ENCODE measurements at regions of chr14 and their contacts with region 1.

Region 1: GRCh38 chr14:23530375-23531055 is 21.1 kb downstream of the ZFHX2 start:
- DNase-seq: no peak
- ATAC-seq: peak in 1 of 8 donors; percentile 63
- H3K4me3 ChIP-seq: no peak overlapping the region
- H3K27ac ChIP-seq: peak overlapping the region in 3 of 10 donors; percentile 8 to 39 (median 10)
- H3K4me1 ChIP-seq: peaks cover 0 to 8% (median 0%) of the 10 kb centered on the region in 9 donors
- H3K27me3 ChIP-seq: no peaks in the 10 kb centered on the region
- CTCF ChIP-seq: no peak

Region 2: GRCh38 chr14:23061995-23062394 is 468.5 kb before region 1 on chr14:
- intact Hi-C with region 1: no loop called
- DNase-seq: peak in 1 of 2 donors; percentile 63
- ATAC-seq: peak in 6 of 8 donors; percentile 26 to 66 (median 47)
- H3K4me3 ChIP-seq: no peak overlapping the region
- H3K27ac ChIP-seq: peak overlapping the region in 4 of 10 donors; percentile 4 to 37 (median 23)
- H3K4me1 ChIP-seq: peaks cover 5 to 26% (median 13%) of the 10 kb centered on the region in 9 donors
- H3K27me3 ChIP-seq: no peaks in the 10 kb centered on the region
- CTCF ChIP-seq: no peak

Region 3: DNA sequence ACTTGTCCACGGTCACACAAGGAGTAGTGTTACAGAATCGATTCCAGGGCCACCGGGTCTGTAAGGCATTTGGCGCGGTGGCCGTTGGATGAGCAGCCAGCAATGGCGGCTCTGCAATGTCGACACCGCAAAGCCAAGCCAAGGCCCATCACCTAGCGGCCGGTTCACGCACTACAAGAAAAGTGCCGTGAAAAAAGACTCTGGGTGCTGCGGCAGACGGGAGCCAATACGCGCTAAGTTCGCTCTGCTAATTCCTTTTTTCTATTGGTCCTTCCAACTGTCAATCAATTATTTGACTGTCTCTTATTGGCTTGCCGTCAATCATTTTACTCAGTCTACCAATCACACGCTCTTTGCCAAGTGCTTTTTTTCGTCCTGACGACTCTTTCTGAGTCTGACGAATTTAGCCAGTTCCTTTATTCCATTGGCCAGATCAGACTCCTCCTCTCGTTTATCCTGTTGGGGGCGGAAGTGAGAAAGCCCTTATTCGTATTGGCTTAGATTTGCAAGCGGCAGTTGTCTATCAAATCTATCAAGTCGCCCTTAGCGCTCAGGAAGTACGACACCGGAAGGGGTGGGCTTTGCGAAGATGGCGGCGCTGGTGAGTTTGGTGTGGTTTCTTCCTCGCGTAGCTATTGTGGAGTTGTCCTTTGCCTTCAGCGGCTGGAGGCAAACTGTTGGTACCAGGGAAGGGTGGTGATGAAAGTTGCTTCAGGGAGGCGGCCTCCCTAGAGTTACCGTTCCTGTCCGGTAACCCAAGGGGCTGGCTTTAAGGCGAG is 61.2 kb before region 1 on chr14 and contains the start of gene NGDN:
- intact Hi-C with region 1: no loop called
- DNase-seq: peak; percentile 92 to 98
- ATAC-seq: peak; percentile 94 to 98 (median 97)
- H3K4me3 ChIP-seq: peak within 1 kb of the TSS; percentile 64 to 93 (median 82)
- H3K27ac ChIP-seq: peak within 1 kb of the TSS; percentile 63 to 92 (median 81)
- H3K4me1 ChIP-seq: peaks cover 0 to 15% (median 10%) of the 10 kb centered on the region in 9 donors
- H3K27me3 ChIP-seq: no peaks in the 10 kb centered on the region
- CTCF ChIP-seq: peak; percentile 77 to 92 (median 85)
- total RNA-seq, gene NGDN: 14.4 to 20.9 (median 17.2) TPM

Region 4: GRCh38 chr14:23550830-23551163 is 20.3 kb after region 1 on chr14:
- intact Hi-C with region 1: loop called in 1 of 10 experiments (anchors 1 kb)
- DNase-seq: peak; percentile 42 to 46
- ATAC-seq: peak; percentile 10 to 44 (median 24)
- H3K4me3 ChIP-seq: peak overlapping the region; percentile 37 to 82 (median 72)
- H3K27ac ChIP-seq: peak overlapping the region in 6 of 10 donors; percentile 47 to 73 (median 60)
- H3K4me1 ChIP-seq: peaks cover 0 to 34% (median 14%) of the 10 kb centered on the region in 9 donors
- H3K27me3 ChIP-seq: peaks cover 0 to 11% (median 0%) of the 10 kb centered on the region in 7 donors
- CTCF ChIP-seq: no peak

Measured in heart right ventricle (tissue), 16 donors.